ENCODE measurements at regions of chr1 and their contacts with region 1.

Region 1: DNA sequence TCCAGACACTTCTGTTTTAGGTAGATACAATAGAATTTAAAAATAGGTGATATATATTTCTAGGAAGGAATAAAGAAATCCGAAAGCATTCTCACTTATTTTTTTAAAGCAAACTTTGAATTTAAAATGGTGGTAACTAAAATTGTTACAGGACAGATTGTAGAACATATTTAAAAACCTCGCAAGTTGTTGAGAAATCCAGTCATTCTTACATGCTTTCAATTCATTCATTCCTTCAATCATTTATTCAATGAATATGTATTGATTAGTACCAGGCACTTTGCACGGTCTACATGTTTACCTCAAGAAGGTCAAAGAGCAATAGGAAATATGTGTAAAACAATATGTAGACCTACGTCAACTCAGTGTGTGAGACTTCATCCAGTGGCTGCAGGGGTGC is 189.9 kb upstream of the SNX7 start:
- DNase-seq: no peak
- ATAC-seq: no peak
- H3K4me3 ChIP-seq: no peak overlapping the region
- H3K4me3 Mint-ChIP-seq: no peak overlapping the region
- H3K27ac ChIP-seq: no peak overlapping the region
- H3K27ac Mint-ChIP-seq: no peak overlapping the region
- H3K4me1 ChIP-seq: no peaks in the 10 kb centered on the region
- H3K4me1 Mint-ChIP-seq: no peaks in the 10 kb centered on the region
- H3K27me3 ChIP-seq: no peaks in the 10 kb centered on the region
- H3K27me3 Mint-ChIP-seq: no peaks in the 10 kb centered on the region
- CTCF ChIP-seq: no peak

Region 2: GRCh38 chr1:98078596-98078995 is 393.0 kb before region 1 on chr1:
- CTCF ChIA-PET with region 1: no interaction called
- POLR2A ChIA-PET with region 1: no interaction called
- intact Hi-C with region 1: no loop called
- DNase-seq: no peak
- ATAC-seq: no peak
- H3K4me3 ChIP-seq: no peak overlapping the region
- H3K4me3 Mint-ChIP-seq: no peak overlapping the region
- H3K27ac ChIP-seq: no peak overlapping the region
- H3K27ac Mint-ChIP-seq: no peak overlapping the region
- H3K4me1 ChIP-seq: no peaks in the 10 kb centered on the region
- H3K4me1 Mint-ChIP-seq: no peaks in the 10 kb centered on the region
- H3K27me3 ChIP-seq: no peaks in the 10 kb centered on the region
- H3K27me3 Mint-ChIP-seq: no peaks in the 10 kb centered on the region
- CTCF ChIP-seq: no peak

Region 3: GRCh38 chr1:98458598-98459485 is 12.8 kb before region 1 on chr1:
- CTCF ChIA-PET with region 1: no interaction called
- POLR2A ChIA-PET with region 1: no interaction called
- intact Hi-C with region 1: no loop called
- DNase-seq: no peak
- ATAC-seq: no peak
- H3K4me3 ChIP-seq: no peak overlapping the region
- H3K4me3 Mint-ChIP-seq: no peak overlapping the region
- H3K27ac ChIP-seq: no peak overlapping the region
- H3K27ac Mint-ChIP-seq: no peak overlapping the region
- H3K4me1 ChIP-seq: no peaks in the 10 kb centered on the region
- H3K4me1 Mint-ChIP-seq: no peaks in the 10 kb centered on the region
- H3K27me3 ChIP-seq: no peaks in the 10 kb centered on the region
- H3K27me3 Mint-ChIP-seq: no peaks in the 10 kb centered on the region
- CTCF ChIP-seq: no peak

Region 4: DNA sequence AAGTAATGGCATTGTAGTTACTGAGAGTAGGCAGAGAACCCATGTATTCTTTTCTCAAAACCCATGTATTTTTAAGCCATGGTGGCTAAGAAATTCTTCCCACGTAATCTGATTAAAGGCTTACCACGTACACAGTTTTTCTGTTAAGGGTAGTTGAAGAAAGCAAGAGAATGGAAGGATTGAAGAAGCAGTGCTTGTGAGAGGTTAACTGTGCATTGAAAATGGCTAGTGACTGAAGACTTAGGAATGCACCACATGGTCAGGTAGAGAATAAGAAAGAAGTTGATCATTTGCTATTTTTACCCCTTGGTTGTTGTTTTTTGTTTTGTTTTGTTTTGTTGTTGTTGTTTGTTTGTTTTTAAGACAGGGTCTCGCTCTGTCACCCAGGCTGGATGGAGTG is 11.0 kb after region 1 on chr1:
- CTCF ChIA-PET with region 1: no interaction called
- POLR2A ChIA-PET with region 1: no interaction called
- intact Hi-C with region 1: loop called (anchors 1 kb)
- DNase-seq: no peak
- ATAC-seq: no peak
- H3K4me3 ChIP-seq: no peak overlapping the region
- H3K4me3 Mint-ChIP-seq: no peak overlapping the region
- H3K27ac ChIP-seq: no peak overlapping the region
- H3K27ac Mint-ChIP-seq: no peak overlapping the region
- H3K4me1 ChIP-seq: no peaks in the 10 kb centered on the region
- H3K4me1 Mint-ChIP-seq: no peaks in the 10 kb centered on the region
- H3K27me3 ChIP-seq: no peaks in the 10 kb centered on the region
- H3K27me3 Mint-ChIP-seq: no peaks in the 10 kb centered on the region
- CTCF ChIP-seq: no peak